ENCODE measurements at regions of chr3 and their contacts with region 1.

Region 1: GRCh38 chr3:178001670-178002101 is 534.5 kb upstream of the KCNMB2 start:
- DNase-seq: peak; percentile 59
- H3K4me3 Mint-ChIP-seq: no peak overlapping the region
- H3K27ac Mint-ChIP-seq: peak overlapping the region; percentile 80
- H3K4me1 Mint-ChIP-seq: peaks cover 63% of the 10 kb centered on the region
- H3K27me3 Mint-ChIP-seq: no peaks in the 10 kb centered on the region

Region 2: GRCh38 chr3:177057768-177058167 is 943.9 kb before region 1 on chr3:
- CTCF ChIA-PET with region 1: no interaction called
- intact Hi-C with region 1: loop called (anchors 5 kb)
- DNase-seq: peak; percentile 84
- H3K4me3 Mint-ChIP-seq: no peak overlapping the region
- H3K27ac Mint-ChIP-seq: no peak overlapping the region
- H3K4me1 Mint-ChIP-seq: peaks cover 32% of the 10 kb centered on the region
- H3K27me3 Mint-ChIP-seq: no peaks in the 10 kb centered on the region

Region 3: GRCh38 chr3:177589911-177590381 is 411.7 kb before region 1 on chr3:
- CTCF ChIA-PET with region 1: no interaction called
- intact Hi-C with region 1: loop called (anchors 5 kb)
- DNase-seq: no peak
- H3K4me3 Mint-ChIP-seq: no peak overlapping the region
- H3K27ac Mint-ChIP-seq: no peak overlapping the region
- H3K4me1 Mint-ChIP-seq: peaks cover 28% of the 10 kb centered on the region
- H3K27me3 Mint-ChIP-seq: no peaks in the 10 kb centered on the region

Region 4: GRCh38 chr3:177810162-177810623 is 191.5 kb before region 1 on chr3:
- CTCF ChIA-PET with region 1: no interaction called
- intact Hi-C with region 1: loop called (anchors 5 kb)
- DNase-seq: no peak
- H3K4me3 Mint-ChIP-seq: no peak overlapping the region
- H3K27ac Mint-ChIP-seq: no peak overlapping the region
- H3K4me1 Mint-ChIP-seq: peaks cover 28% of the 10 kb centered on the region
- H3K27me3 Mint-ChIP-seq: no peaks in the 10 kb centered on the region

Region 5: DNA sequence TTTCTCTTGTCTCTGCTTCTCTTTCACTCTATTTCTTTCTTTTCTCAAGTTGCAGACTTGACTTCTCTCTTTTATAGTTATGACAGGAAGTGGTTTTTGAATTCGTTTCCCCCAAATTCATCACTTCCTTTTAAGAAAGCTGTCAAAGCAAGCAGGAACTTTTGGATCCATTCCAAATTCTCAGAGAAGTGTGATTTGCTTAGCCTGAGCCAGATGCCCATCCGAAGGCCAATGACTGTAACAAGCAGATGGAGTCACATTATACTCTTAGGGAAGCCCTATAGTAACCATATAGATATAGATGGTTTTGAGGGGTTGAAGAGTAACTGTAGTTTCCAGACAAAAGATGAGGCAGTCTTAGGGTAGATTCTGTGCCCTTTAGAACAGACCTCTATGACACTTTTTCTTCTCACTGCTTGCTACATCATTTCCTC is 57.4 kb before region 1 on chr3:
- CTCF ChIA-PET with region 1: no interaction called
- intact Hi-C with region 1: loop called (anchors 1 kb)
- DNase-seq: peak; percentile 24
- H3K4me3 Mint-ChIP-seq: no peak overlapping the region
- H3K27ac Mint-ChIP-seq: peak overlapping the region; percentile 85
- H3K4me1 Mint-ChIP-seq: peaks cover 36% of the 10 kb centered on the region
- H3K27me3 Mint-ChIP-seq: no peaks in the 10 kb centered on the region